Aorta (tissue), 5 donors: ENCODE measurements at regions of chr5 and their contacts with region 1.

Region 1: GRCh38 chr5:137660349-137660817 is 75.5 kb downstream of the KLHL3 start:
- DNase-seq: peak; percentile 72 to 81
- ATAC-seq: peak; percentile 86
- H3K4me3 ChIP-seq: no peak overlapping the region
- H3K27ac ChIP-seq: peak overlapping the region; percentile 9 to 20
- H3K4me1 ChIP-seq: peaks cover 0 to 5% of the 10 kb centered on the region in 2 donors
- H3K27me3 ChIP-seq: no peaks in the 10 kb centered on the region

Region 2: DNA sequence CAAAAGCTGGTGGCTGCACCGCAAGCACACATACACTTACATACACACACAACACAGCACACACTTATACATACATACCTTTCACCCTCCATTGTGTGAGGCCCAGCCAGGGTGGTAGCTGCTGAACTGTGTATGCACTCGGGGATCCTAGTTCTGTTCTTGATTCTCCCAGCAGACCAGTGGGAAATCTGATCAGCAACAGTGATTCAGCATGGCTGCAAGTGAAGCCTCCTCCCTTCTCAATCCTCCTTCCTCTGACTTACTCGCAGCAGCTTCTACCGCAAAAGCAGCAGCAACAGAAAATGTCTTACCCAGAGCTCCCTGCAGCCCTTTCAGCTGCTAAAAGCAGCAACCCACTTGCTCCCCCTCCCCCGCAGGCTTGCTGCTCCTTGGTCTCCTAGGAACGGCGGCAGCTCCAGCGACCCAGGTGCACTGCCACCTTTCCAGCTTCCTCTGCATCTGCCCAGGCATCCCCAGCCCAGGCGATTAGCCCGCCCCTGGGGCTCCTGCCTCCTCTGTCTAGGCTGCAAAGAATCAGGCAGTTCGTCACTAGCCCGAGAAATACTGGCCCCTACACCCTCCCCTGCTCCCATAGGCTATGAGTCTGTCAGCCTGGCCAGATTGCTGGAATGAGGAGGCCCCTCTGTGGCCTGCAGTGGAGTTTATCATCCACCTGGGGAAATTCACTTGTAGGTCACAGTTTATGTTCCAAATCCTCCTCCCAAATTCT is 75.3 kb after region 1 on chr5 and contains the start of gene KLHL3:
- intact Hi-C with region 1: loop called in 1 of 2 experiments (anchors 2 kb)
- DNase-seq: peak; percentile 53 to 77
- ATAC-seq: peak; percentile 67
- H3K4me3 ChIP-seq: peak within 1 kb of the TSS; percentile 56 to 81
- H3K27ac ChIP-seq: peak within 1 kb of the TSS in 1 of 2 donors; percentile 60
- H3K4me1 ChIP-seq: peaks cover 6 to 11% of the 10 kb centered on the region in 2 donors
- H3K27me3 ChIP-seq: no peaks in the 10 kb centered on the region
- total RNA-seq, gene KLHL3: 20.7 to 38.1 TPM

Region 3: DNA sequence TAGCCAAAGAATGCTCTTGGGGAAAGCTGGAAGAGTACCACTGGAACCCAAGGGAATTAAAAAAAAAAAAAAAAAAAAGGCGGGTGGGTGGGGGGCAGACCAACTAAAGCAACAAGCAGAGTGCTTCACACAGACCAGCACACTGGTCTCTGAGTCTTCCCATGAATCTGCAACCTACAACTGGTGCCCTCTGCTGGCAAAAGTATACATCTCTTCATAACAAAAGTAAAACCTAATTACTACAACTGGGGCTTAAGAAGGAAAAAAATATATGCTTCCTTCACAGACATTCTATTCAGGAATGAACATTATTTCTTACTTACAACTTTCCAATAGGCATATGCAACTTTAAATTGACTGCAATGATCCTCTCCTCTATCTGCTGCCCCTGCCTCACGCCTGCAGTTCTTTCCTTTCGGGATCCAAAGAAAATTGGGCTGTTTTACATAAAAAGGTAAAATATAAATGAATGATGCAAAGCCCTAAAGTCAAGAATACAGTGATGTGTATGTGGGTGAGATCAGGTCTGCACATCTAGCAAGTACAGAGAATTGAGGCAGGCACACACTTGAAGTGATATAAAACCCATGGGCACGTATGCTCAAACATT is 82.8 kb after region 1 on chr5:
- intact Hi-C with region 1: loop called (anchors 1 to 2 kb)
- DNase-seq: no peak
- ATAC-seq: peak; percentile 87
- H3K4me3 ChIP-seq: no peak overlapping the region
- H3K27ac ChIP-seq: no peak overlapping the region
- H3K4me1 ChIP-seq: peaks cover 0 to 3% of the 10 kb centered on the region in 2 donors
- H3K27me3 ChIP-seq: no peaks in the 10 kb centered on the region